ENCODE measurements at regions of chr6 and their contacts with region 1.

Region 1: DNA sequence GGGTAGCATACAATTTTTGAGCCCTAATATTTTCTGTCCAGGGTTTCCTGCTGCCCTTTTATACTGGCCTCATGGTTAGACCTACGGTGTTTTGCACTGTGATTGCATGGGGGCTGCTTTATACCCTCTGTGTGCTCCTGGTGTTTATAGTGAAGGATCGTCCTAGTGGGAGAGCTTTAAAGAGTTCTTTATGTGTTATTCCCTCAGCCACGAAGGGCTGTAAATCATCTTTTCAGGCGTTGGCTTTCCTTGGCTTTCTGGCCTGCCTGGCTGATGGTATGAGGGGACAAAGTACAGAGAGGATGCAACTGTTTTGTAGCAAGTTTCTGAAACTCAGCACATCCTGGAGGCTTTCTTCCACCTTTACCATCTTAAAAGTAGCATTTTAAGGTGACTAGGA is 464.3 kb downstream of the EPM2A start:
- DNase-seq: no peak
- ATAC-seq: no peak
- H3K4me3 ChIP-seq: no peak overlapping the region
- H3K27ac ChIP-seq: no peak overlapping the region
- H3K4me1 ChIP-seq: no peaks in the 10 kb centered on the region
- H3K27me3 ChIP-seq: no peaks in the 10 kb centered on the region
- CTCF ChIP-seq: no peak
- POLR2A ChIP-seq: no peak
- RAD21 ChIP-seq: no peak

Region 2: DNA sequence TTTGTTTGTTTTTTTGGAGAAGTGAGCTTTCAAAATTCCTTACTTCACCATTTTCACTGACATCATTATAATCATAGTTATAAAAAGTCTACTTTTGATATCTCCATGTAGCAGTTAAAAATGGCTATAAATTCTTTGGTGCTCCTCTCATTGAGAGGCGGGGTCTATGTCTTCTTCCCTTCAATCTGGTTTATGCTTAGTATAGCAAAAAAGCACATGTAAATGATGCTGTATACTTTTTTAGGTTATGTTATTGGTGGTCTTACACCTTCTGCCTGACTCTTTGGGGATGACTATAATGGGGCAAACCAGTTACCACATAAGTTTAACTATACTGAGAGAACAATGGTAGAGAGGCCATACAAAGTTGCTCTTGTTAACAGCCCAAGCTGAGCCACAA is 174.6 kb after region 1 on chr6:
- CTCF ChIA-PET with region 1: no interaction called
- POLR2A ChIA-PET with region 1: interaction called, 13 read pairs
- dilution Hi-C with region 1: no loop called
- in situ Hi-C with region 1: no loop called
- intact Hi-C with region 1: no loop called
- DNase-seq: no peak
- ATAC-seq: no peak
- H3K4me3 ChIP-seq: no peak overlapping the region
- H3K27ac ChIP-seq: no peak overlapping the region
- H3K4me1 ChIP-seq: no peaks in the 10 kb centered on the region
- H3K27me3 ChIP-seq: no peaks in the 10 kb centered on the region
- CTCF ChIP-seq: no peak
- POLR2A ChIP-seq: no peak
- RAD21 ChIP-seq: no peak

Measured in IMR-90 (cell line).